ENCODE measurements at regions of chr17 and their contacts with region 1.

Region 1: GRCh38 chr17:75109407-75110233 is at the start of gene ARMC7:
- DNase-seq: peak; percentile 77
- ATAC-seq: peak; percentile 88
- H3K4me3 ChIP-seq: peak within 1 kb of the TSS; percentile 87
- H3K27ac ChIP-seq: peak within 1 kb of the TSS; percentile 48
- H3K4me1 ChIP-seq: 0 out of 2 replicates have a peak, but pooled peaks cover 7% of the 10 kb centered on the region
- H3K27me3 ChIP-seq: peaks cover 2% of the 10 kb centered on the region; the same call in 1 of the 2 replicates
- CTCF ChIP-seq: no peak
- POLR2A ChIP-seq: no peak
- RAD21 ChIP-seq: peak; percentile 2; the same call in 1 of the 2 replicates
- total RNA-seq, gene ARMC7: 1.7 and 1.8 TPM in 2 replicates

Region 2: GRCh38 chr17:74408262-74408661 is 701.4 kb before region 1 on chr17:
- CTCF ChIA-PET with region 1: no interaction called
- POLR2A ChIA-PET with region 1: no interaction called
- dilution Hi-C with region 1: no loop called
- in situ Hi-C with region 1: no loop called
- intact Hi-C with region 1: no loop called
- DNase-seq: no peak
- ATAC-seq: no peak
- H3K4me3 ChIP-seq: no peak overlapping the region
- H3K27ac ChIP-seq: no peak overlapping the region
- H3K4me1 ChIP-seq: no peaks in the 10 kb centered on the region
- H3K27me3 ChIP-seq: no peaks in the 10 kb centered on the region
- CTCF ChIP-seq: no peak
- POLR2A ChIP-seq: no peak
- RAD21 ChIP-seq: no peak

Region 3: DNA sequence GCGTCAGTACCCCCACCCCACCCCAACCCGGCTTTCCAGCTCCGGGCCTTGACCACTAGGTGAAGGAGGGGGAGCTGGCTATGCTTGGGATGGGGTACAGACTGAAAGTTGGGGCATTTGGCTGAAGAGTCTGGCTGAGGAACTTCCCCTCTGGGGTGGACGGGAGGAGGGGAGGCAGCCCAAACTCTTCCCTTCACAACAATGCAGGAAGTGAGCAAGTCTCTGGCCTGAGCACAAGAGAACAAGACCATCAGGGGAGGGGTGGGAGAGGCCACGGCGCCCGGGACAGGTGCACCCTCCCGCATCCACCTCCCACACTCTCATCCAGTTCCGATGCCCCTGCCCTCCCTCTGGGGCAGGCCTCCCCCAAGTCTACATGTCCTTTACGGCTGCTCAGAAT is 192.2 kb before region 1 on chr17:
- CTCF ChIA-PET with region 1: no interaction called
- POLR2A ChIA-PET with region 1: no interaction called
- dilution Hi-C with region 1: no loop called
- in situ Hi-C with region 1: no loop called
- intact Hi-C with region 1: no loop called
- DNase-seq: no peak
- ATAC-seq: no peak
- H3K4me3 ChIP-seq: no peak overlapping the region
- H3K27ac ChIP-seq: no peak overlapping the region
- H3K4me1 ChIP-seq: no peaks in the 10 kb centered on the region
- H3K27me3 ChIP-seq: peaks cover 48% of the 10 kb centered on the region
- CTCF ChIP-seq: no peak
- POLR2A ChIP-seq: no peak
- RAD21 ChIP-seq: no peak

Region 4: DNA sequence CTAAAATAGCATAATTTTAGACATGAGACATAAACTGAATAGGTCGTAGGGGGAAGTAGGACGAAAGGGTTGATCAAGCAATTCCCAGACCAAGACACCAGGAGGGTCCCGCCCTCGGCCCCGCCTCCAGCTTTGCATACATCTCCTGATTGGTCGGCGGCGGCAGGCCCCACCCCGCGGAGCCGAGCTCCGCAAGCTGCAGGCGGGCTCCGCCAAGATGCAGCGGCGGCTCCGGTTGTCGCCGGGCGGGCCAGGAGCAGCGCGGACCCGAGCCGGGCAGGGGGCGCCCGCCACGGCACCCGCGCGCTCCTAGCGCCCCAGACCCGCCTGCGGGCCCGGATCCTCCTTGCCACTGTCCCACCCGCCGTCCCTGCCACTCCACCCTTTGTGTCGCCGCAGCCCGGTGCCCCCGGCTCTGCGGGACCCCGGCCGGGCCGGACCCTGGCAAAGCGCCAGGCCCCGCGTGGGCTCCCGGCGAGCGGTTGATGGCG is 122.2 kb before region 1 on chr17 and contains the start of gene CDR2L:
- CTCF ChIA-PET with region 1: no interaction called
- POLR2A ChIA-PET with region 1: no interaction called
- dilution Hi-C with region 1: no loop called
- in situ Hi-C with region 1: no loop called
- intact Hi-C with region 1: loop called (anchors 5 kb)
- DNase-seq: peak; percentile 89
- ATAC-seq: peak; percentile 92
- H3K4me3 ChIP-seq: peak within 1 kb of the TSS; percentile 95
- H3K27ac ChIP-seq: peak within 1 kb of the TSS; percentile 92
- H3K4me1 ChIP-seq: peaks cover 12% of the 10 kb centered on the region
- H3K27me3 ChIP-seq: no peaks in the 10 kb centered on the region
- CTCF ChIP-seq: no peak
- POLR2A ChIP-seq: peak; percentile 81
- RAD21 ChIP-seq: no peak
- total RNA-seq, gene CDR2L: 5.6 and 5.7 TPM in 2 replicates

Region 5: GRCh38 chr17:75024686-75025397 is 84.8 kb before region 1 on chr17:
- CTCF ChIA-PET with region 1: no interaction called
- POLR2A ChIA-PET with region 1: no interaction called
- dilution Hi-C with region 1: no loop called
- in situ Hi-C with region 1: no loop called
- intact Hi-C with region 1: no loop called
- DNase-seq: no peak
- ATAC-seq: no peak
- H3K4me3 ChIP-seq: no peak overlapping the region
- H3K27ac ChIP-seq: no peak overlapping the region
- H3K4me1 ChIP-seq: no peaks in the 10 kb centered on the region
- H3K27me3 ChIP-seq: no peaks in the 10 kb centered on the region
- CTCF ChIP-seq: no peak
- POLR2A ChIP-seq: no peak
- RAD21 ChIP-seq: no peak

Region 6: GRCh38 chr17:75069783-75070182 is 39.8 kb before region 1 on chr17:
- CTCF ChIA-PET with region 1: interaction called, 9 read pairs
- POLR2A ChIA-PET with region 1: no interaction called
- dilution Hi-C with region 1: no loop called
- in situ Hi-C with region 1: no loop called
- intact Hi-C with region 1: loop called (anchors 5 kb)
- DNase-seq: no peak
- ATAC-seq: peak; percentile 85
- H3K4me3 ChIP-seq: no peak overlapping the region
- H3K27ac ChIP-seq: no peak overlapping the region
- H3K4me1 ChIP-seq: no peaks in the 10 kb centered on the region
- H3K27me3 ChIP-seq: no peaks in the 10 kb centered on the region
- CTCF ChIP-seq: peak; percentile 53
- POLR2A ChIP-seq: no peak
- RAD21 ChIP-seq: peak; percentile 54

Region 7: DNA sequence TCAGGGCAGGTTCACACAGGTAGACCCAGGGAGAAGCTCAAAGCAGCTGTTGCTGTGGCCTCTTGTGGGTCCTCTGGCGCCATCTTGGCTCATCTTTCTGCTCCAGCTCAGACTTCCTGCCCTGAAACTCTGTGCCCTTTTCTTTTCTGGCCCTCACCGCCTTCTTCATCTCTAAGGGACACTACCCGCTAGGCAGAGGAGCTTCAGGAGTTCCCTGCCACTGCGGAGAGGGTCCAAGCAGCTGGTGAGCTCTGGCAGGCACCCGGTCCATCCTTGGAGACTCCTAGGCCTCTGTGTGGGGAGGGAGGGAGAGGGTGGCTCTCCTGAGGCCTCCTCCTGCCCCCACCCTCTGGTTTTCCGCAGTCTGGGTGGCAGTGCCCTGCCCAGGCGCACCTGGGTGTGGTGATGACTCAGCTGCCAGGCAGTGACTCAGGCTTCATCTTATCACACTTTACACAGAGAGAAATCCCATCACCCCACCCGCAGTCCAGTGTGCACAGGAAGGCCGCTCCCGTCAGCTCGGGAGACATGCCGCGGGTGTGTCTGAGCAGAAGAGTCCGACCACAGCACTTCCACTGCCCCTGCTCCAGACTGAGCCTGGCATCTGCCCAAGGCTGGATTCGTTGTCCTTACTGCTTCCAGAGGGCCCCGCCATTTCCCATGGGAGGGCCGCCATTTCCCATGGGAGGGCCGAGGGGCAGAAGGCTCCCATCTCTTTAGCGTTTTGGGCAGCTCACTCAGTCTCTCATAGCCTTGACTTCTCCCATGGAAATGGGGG is 14.6 kb after region 1 on chr17:
- CTCF ChIA-PET with region 1: interaction called, 13 read pairs
- POLR2A ChIA-PET with region 1: interaction called, 3 read pairs
- dilution Hi-C with region 1: no loop called
- in situ Hi-C with region 1: no loop called
- intact Hi-C with region 1: no loop called
- DNase-seq: peak; percentile 18
- ATAC-seq: 0 out of 2 replicates have a peak, but pooled peaks have one; percentile 38
- H3K4me3 ChIP-seq: no peak overlapping the region
- H3K27ac ChIP-seq: no peak overlapping the region
- H3K4me1 ChIP-seq: 0 out of 2 replicates have a peak, but pooled peaks cover 2% of the 10 kb centered on the region
- H3K27me3 ChIP-seq: no peaks in the 10 kb centered on the region
- CTCF ChIP-seq: no peak
- POLR2A ChIP-seq: no peak
- RAD21 ChIP-seq: no peak

Region 8: DNA sequence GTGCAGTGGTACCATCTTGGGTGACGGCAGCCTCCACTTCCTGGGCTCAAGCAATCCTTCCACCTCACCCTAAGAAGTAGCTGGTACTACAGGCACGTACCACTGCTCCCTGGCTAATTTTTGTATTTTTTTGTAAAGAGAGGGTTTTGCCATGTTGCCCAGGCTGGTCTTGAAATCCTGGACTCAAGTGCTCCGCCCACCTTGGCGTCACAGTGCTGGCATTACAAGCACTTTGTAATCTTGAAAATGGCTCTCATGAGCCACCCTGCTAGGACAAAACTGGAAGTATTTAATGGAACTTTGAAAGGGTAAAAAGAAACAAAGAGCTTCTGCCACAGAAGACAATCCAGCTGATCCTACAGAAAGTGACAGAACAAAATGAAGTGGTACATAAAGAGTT is 63.9 kb after region 1 on chr17:
- CTCF ChIA-PET with region 1: interaction called, 10 read pairs
- POLR2A ChIA-PET with region 1: no interaction called
- dilution Hi-C with region 1: no loop called
- in situ Hi-C with region 1: no loop called
- intact Hi-C with region 1: no loop called
- DNase-seq: no peak
- ATAC-seq: no peak
- H3K4me3 ChIP-seq: no peak overlapping the region
- H3K27ac ChIP-seq: no peak overlapping the region
- H3K4me1 ChIP-seq: no peaks in the 10 kb centered on the region
- H3K27me3 ChIP-seq: no peaks in the 10 kb centered on the region
- CTCF ChIP-seq: no peak
- POLR2A ChIP-seq: no peak
- RAD21 ChIP-seq: no peak